Ovary (tissue), 10 donors: ENCODE measurements at regions of chr22 and their contacts with region 1.

Region 1: GRCh38 chr22:32206774-32207758 is 2.2 kb upstream of the RFPL2 start:
- DNase-seq: no peak
- H3K4me3 ChIP-seq: no peak overlapping the region
- H3K27ac ChIP-seq: no peak overlapping the region
- H3K4me1 ChIP-seq: peaks cover 2% of the 10 kb centered on the region
- H3K27me3 ChIP-seq: no peaks in the 10 kb centered on the region
- CTCF ChIP-seq: no peak
- EP300 ChIP-seq: no peak
- POLR2A ChIP-seq: no peak

Region 2: DNA sequence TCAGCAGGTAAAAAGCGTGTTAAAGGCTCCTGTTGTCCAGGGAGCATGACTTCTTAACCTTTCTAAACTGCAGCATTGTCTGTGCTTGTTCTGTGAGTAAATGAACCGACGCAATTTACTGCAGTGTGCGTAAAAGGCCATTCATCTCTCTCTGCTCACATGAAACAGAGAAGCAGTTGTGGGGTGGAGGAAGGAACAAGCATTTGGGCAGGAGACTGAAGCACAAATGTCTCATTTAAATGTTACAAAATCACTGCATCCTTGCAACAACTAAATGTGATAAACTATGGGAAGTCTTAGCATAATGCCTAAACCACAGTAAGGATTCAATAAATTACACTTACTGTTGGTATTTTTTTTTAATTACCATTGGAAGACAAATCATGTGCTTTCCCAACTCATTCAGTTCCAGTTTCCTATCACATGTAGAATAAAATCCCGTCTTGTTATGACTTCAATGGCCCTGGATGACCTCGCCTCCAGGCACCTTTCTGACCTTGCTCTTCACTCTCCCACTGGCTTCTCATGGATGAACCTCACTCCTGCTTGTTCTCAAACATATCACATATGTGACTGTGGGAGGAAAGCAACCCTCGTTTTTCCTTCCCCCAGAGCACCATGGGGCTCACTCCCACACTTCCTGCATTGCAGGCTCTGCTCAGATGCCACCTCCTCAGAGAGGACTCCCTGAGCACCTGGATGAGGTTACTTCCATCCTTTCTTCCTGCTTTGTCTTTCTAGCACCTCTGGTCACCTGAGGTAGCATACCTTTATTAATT is 19.4 kb after region 1 on chr22:
- intact Hi-C with region 1: loop called in 1 of 4 experiments (anchors 2 kb)
- DNase-seq: no peak
- H3K4me3 ChIP-seq: no peak overlapping the region
- H3K27ac ChIP-seq: no peak overlapping the region
- H3K4me1 ChIP-seq: no peaks in the 10 kb centered on the region
- H3K27me3 ChIP-seq: no peaks in the 10 kb centered on the region
- CTCF ChIP-seq: no peak
- EP300 ChIP-seq: no peak
- POLR2A ChIP-seq: no peak